Ascending aorta (tissue), 2 donors: ENCODE measurements at regions of chr6 and their contacts with region 1.

Region 1: GRCh38 chr6:81752138-81752920 is at the start of gene TENT5A:
- DNase-seq: peak; percentile 82 to 96
- H3K4me3 ChIP-seq: peak within 1 kb of the TSS; percentile 82 to 93
- H3K27ac ChIP-seq: peak within 1 kb of the TSS; percentile 90 to 97
- H3K4me1 ChIP-seq: peaks cover 0 to 10% of the 10 kb centered on the region in 2 donors
- H3K27me3 ChIP-seq: no peaks in the 10 kb centered on the region
- CTCF ChIP-seq: peak in 1 of 3 experiments; percentile 11
- total RNA-seq, gene TENT5A: 9.6 TPM

Region 2: DNA sequence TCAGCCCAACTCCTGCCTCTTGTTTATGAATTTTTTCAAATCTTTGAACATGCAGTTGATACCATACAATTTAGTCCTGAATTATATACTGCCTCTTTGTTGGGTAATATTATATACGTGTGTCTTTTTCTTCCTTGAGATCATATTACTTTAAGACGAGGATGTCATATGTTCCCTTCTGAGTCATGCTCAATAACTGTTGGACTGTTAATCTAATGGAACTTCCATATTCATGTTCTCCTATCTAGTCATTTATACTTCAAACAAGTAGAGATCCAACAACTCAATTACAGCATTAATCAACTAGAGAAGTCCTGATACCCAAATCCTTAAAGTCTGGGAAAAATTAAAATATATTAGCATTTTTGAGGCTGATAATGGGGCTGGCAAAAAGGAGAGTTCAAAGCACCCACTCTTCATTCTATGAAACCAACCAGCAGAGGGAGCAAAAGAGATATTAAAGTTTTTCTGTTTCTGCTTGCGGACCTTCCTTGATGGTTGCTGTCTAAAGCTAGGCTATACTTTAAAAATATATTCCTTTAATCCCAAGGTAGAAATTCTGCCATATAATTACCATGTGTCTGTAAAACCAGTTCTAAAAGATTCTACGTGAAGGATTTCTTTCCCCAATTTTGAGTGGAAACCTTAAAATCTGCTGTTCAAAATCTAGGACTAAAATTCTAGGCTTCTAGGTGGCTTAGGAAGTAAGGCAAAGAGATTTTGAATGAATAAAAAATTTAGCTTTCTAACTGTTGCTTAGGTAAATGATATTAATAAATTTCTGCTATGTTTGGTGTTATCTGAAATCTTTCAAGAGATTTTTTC is 1147.0 kb before region 1 on chr6:
- intact Hi-C with region 1: loop called (anchors 5 kb)
- DNase-seq: no peak
- H3K4me3 ChIP-seq: no peak overlapping the region
- H3K27ac ChIP-seq: no peak overlapping the region
- H3K4me1 ChIP-seq: peaks cover 0 to 14% of the 10 kb centered on the region in 2 donors
- H3K27me3 ChIP-seq: no peaks in the 10 kb centered on the region
- CTCF ChIP-seq: peak; percentile 8 to 62 (median 43)

Region 3: GRCh38 chr6:81265092-81265491 is 487.2 kb before region 1 on chr6:
- intact Hi-C with region 1: loop called (anchors 2 kb)
- DNase-seq: peak in 1 of 2 donors; percentile 80
- H3K4me3 ChIP-seq: peak overlapping the region; percentile 43 to 57
- H3K27ac ChIP-seq: peak overlapping the region; percentile 68 to 69
- H3K4me1 ChIP-seq: peaks cover 0 to 2% of the 10 kb centered on the region in 2 donors
- H3K27me3 ChIP-seq: no peaks in the 10 kb centered on the region
- CTCF ChIP-seq: no peak

Region 4: GRCh38 chr6:81772741-81773140 is 20.4 kb after region 1 on chr6:
- intact Hi-C with region 1: no loop called
- DNase-seq: no peak
- H3K4me3 ChIP-seq: no peak overlapping the region
- H3K27ac ChIP-seq: no peak overlapping the region
- H3K4me1 ChIP-seq: no peaks in the 10 kb centered on the region
- H3K27me3 ChIP-seq: no peaks in the 10 kb centered on the region
- CTCF ChIP-seq: no peak

Region 5: DNA sequence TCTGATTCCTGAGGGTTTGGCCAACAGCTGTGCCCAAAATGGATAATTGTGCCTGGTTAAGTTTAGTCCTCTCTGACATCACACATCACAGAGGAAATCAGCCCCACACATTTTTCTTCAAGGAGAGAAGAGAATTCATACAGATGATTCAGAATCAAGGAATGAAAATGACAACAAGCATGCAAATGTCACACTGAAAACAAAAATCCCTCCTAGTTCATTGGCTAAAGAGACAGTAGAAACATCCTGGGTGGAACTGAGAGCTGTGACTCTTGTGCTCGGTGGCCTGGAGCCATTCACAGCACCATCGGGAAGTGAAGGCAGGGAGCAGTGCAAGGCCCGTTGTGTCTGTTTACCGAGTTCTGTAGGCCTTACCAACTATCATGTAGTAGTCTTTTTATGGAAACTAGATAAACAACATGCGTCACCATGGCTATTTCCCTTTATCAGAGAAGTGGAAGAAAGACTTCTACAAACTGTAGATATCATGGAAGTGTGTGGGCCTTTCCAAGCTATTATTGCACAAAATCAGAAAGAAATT is 81.9 kb after region 1 on chr6:
- intact Hi-C with region 1: loop called (anchors 2 kb)
- DNase-seq: peak in 1 of 2 donors; percentile 66
- H3K4me3 ChIP-seq: no peak overlapping the region
- H3K27ac ChIP-seq: peak overlapping the region; percentile 63 to 72
- H3K4me1 ChIP-seq: peaks cover 0 to 8% of the 10 kb centered on the region in 2 donors
- H3K27me3 ChIP-seq: no peaks in the 10 kb centered on the region
- CTCF ChIP-seq: no peak

Region 6: GRCh38 chr6:82017288-82017687 is 265.0 kb after region 1 on chr6:
- intact Hi-C with region 1: loop called (anchors 1 kb)
- DNase-seq: peak in 1 of 2 donors; percentile 88
- H3K4me3 ChIP-seq: peak overlapping the region; percentile 13 to 16
- H3K27ac ChIP-seq: peak overlapping the region; percentile 83 to 87
- H3K4me1 ChIP-seq: peaks cover 19 to 53% of the 10 kb centered on the region in 2 donors
- H3K27me3 ChIP-seq: no peaks in the 10 kb centered on the region
- CTCF ChIP-seq: no peak

Region 7: DNA sequence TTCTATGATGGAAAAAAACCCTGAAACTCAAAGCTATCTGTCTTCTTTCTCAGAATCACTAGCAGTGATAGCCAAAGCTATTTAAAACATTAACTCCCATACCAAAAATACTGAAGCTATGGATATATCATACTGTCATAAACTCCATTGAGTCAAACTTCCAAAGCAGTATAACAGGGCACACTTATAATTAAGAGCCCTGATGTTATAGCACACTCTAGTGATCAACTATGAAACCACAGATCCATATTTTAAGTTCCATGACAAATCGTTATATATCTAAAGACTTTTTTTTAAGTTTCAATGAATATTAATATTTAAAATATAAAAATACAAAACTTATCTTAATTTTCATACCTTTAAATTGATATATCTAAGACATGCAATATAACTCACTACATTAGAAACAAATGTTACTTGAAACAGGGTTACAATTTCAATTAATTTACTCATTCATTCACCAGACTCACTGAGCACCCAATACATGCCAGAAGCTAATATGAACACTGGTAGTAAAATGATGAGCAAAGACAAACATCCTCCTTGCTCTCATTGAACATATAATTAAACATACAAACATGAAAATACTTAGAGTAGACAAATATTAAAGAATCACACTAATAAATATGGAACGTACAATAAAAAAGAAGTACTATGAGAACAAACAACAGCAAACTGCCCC is 425.9 kb after region 1 on chr6:
- intact Hi-C with region 1: loop called (anchors 2 kb)
- DNase-seq: no peak
- H3K4me3 ChIP-seq: no peak overlapping the region
- H3K27ac ChIP-seq: no peak overlapping the region
- H3K4me1 ChIP-seq: no peaks in the 10 kb centered on the region
- H3K27me3 ChIP-seq: no peaks in the 10 kb centered on the region
- CTCF ChIP-seq: peak; percentile 23 to 62 (median 61)